Vagina (tissue), 2 donors: ENCODE measurements at regions of chr11 and their contacts with region 1.

Region 1: GRCh38 chr11:85941380-85941973 is 86.3 kb downstream of the CCDC83 start:
- DNase-seq: no peak
- H3K4me3 ChIP-seq: no peak overlapping the region
- H3K27ac ChIP-seq: no peak overlapping the region
- H3K4me1 ChIP-seq: peaks cover 4% of the 10 kb centered on the region
- H3K27me3 ChIP-seq: no peaks in the 10 kb centered on the region
- CTCF ChIP-seq: peak; percentile 47 to 70 (median 51)
- POLR2A ChIP-seq: no peak

Region 2: DNA sequence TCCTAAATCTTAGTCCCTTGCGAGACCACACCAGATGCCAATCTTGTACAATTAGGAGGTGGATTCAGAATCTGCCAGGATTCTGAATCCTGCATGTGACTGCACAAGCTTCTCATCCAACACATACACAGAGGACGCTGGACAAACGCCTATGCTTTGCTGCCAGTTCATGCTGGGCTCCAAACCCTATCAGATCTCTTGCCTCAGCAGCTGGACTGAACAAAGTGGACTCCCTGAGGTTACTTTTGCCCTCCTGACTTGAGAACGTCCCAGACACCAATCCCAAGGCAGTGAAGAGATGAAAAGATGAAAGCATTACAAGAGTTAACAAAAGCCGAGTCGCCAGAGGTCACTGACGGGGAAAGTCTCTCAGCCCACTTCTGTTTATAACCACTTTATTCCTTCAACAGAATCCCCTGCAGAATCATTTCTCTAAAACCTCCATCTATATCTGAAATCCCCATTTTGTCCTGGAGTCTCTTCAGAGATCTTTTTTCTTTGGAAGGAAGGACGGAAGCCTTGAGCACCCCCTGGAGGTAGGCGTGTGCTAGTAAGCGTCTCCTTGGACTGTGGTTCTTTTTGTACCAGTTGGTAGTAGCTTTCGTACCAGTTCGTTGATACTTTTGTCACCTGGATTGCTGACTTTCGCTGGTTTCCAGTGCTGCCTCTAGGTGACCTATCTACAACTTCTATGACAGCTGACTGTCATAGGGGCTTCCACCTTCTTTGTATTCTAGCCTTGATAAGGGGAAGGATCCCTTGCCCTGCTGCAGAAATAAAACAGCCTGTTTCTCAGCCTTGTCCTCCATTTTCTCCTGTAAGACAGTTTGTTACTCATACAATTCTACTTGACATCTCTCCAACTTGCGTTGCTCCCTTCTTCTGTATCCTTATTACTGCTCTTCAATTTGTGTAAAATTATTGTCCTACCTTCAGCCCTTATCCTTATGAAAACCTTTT is 276.9 kb after region 1 on chr11:
- intact Hi-C with region 1: loop called (anchors 2 kb)
- DNase-seq: no peak
- H3K4me3 ChIP-seq: peak overlapping the region in 1 of 2 donors; percentile 20
- H3K27ac ChIP-seq: no peak overlapping the region
- H3K4me1 ChIP-seq: peaks cover 7% of the 10 kb centered on the region
- H3K27me3 ChIP-seq: no peaks in the 10 kb centered on the region
- CTCF ChIP-seq: peak in 2 of 3 experiments; percentile 83 to 84
- POLR2A ChIP-seq: no peak